Left ventricle myocardium superior (tissue), 1 donor: ENCODE measurements at regions of chr19 and their contacts with region 1.

Region 1: GRCh38 chr19:51467864-51468544 is 9.8 kb upstream of the SIGLEC8 start:
- DNase-seq: no peak
- ATAC-seq: no peak

Region 2: DNA sequence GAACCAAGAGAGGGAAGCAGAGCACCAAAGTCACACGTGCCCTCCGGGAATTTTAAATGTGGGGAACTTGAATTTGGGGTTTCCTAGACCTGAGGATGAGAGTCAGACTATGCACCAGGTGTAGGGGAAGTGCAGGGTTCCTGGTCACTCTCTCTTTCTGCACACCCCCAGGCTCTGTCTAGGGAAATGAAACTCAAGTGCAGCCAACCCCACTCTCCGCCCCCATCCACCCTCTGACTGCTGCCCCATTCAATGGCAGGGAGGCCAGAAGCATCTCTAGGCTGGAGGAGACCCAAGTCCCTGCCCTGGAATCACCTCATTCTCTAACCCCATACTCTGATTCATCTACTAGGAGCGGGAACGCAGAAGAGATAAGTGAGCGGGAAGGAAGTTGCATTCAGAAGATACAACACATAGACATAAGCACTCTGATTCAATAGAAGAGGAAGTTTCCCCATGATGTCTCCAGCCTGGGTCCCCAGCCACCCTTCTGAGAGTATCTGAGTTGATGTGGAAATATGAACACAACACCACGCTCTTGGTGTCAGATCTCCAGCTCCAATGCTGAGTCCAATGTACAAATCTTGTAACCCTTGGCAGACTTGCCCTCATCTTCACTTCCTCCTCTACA is 183.3 kb after region 1 on chr19:
- intact Hi-C with region 1: loop called (anchors 5 kb)
- DNase-seq: no peak
- ATAC-seq: peak; percentile 38